Activated naive CD4-positive, alpha-beta T cell treated with anti-CD3 and anti-CD28 coated beads for 36 hours (primary cell): ENCODE measurements at regions of chr3 and their contacts with region 1.

Region 1: DNA sequence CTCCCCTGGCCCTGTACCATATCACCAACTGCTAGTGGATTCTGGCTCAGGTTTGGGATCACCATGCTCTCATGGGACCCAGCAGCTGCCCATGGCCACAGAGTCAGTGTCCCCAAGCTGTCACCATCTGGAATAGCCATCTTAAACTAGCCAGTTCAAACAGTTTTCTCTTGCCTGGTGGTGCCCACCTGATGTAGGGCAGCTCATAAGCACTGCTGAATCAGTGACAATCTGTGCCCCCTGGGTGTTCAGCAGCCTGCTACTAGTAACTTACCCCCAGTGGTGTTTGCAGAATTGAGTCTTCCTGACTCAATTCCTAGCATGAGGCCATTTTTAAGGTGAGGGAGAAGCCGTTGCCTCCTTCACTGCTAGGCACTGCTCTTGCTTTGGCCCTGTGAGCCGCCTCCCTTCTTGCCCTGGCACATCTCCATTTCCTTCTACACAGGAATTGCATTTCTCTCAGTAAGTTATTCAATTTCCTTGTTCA is 7.9 kb downstream of the RPSA start:
- DNase-seq: no peak
- H3K4me3 Mint-ChIP-seq: no peak overlapping the region
- H3K27ac Mint-ChIP-seq: peak overlapping the region; percentile 42
- H3K4me1 Mint-ChIP-seq: peaks cover 19% of the 10 kb centered on the region
- H3K27me3 Mint-ChIP-seq: no peaks in the 10 kb centered on the region

Region 2: GRCh38 chr3:39361252-39361927 is 53.1 kb before region 1 on chr3:
- CTCF ChIA-PET with region 1: no interaction called
- intact Hi-C with region 1: no loop called
- DNase-seq: peak; percentile 64
- H3K4me3 Mint-ChIP-seq: no peak overlapping the region
- H3K27ac Mint-ChIP-seq: peak overlapping the region; percentile 46
- H3K4me1 Mint-ChIP-seq: peaks cover 28% of the 10 kb centered on the region
- H3K27me3 Mint-ChIP-seq: no peaks in the 10 kb centered on the region

Region 3: DNA sequence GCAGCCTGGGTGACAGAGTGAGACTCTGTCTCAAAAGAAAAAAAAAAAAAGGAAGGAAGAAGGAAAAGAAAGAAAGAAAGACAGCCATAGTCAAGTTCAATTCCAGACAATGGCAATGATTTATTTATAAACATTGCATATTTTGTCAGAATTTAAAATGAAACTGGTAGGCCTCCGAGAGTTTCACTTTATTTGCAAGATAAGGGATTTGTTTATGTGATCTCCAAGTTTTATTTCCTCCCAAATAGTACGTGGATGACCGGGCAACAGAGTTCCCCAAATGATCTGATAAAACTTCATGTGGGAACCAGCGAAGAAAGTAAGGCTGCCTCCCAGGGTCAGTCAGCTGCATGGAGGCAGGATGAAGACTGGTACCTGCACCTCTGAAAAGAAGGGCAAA is 24.4 kb after region 1 on chr3:
- CTCF ChIA-PET with region 1: no interaction called
- intact Hi-C with region 1: no loop called
- DNase-seq: no peak
- H3K4me3 Mint-ChIP-seq: no peak overlapping the region
- H3K27ac Mint-ChIP-seq: no peak overlapping the region
- H3K4me1 Mint-ChIP-seq: no peaks in the 10 kb centered on the region
- H3K27me3 Mint-ChIP-seq: no peaks in the 10 kb centered on the region

Region 4: DNA sequence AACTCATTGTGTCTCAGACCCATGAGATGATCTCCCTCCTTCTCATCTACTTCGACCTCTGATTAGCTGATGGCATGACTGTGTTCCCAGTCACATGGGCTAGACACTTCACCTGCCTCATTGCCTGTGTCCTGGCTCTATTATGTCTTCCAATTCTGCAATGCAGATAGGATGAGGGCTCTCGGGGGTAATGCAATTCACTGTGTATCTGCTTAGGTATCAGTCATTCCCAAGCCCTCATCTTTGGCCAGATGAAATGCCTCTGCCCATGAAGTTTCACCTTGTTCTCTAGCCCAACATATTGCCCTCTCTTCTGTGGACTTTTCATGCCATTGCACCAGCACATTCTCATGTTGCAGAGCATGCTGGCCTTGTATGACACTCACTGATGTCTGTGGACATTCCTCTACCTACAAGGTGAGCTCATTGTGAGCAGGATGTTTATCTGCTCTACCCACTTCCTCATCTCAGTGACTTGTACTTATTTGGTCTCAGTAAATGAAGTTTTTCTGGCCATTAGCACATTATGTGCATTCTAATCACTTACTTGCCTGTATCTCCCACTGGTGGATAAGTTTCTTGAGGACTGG is 85.3 kb after region 1 on chr3:
- CTCF ChIA-PET with region 1: interaction called, 15 read pairs
- intact Hi-C with region 1: loop called (anchors 1 kb)
- DNase-seq: no peak
- H3K4me3 Mint-ChIP-seq: no peak overlapping the region
- H3K27ac Mint-ChIP-seq: no peak overlapping the region
- H3K4me1 Mint-ChIP-seq: peaks cover 4% of the 10 kb centered on the region
- H3K27me3 Mint-ChIP-seq: peaks cover 35% of the 10 kb centered on the region